Breast epithelium (tissue), 4 donors: ENCODE measurements at regions of chr3 and their contacts with region 1.

Region 1: GRCh38 chr3:127915115-127915936 is at the start of gene KBTBD12:
- DNase-seq: no peak
- H3K4me3 ChIP-seq: peak within 1 kb of the TSS; percentile 47 to 73 (median 54)
- H3K27ac ChIP-seq: no peak within 1 kb of the TSS
- H3K4me1 ChIP-seq: peaks cover 0 to 7% of the 10 kb centered on the region in 2 donors
- H3K27me3 ChIP-seq: no peaks in the 10 kb centered on the region
- CTCF ChIP-seq: no peak
- POLR2A ChIP-seq: no peak
- total RNA-seq, gene KBTBD12: 0.32 to 0.73 TPM in 2 of 3 donors, not detected in the other

Region 2: DNA sequence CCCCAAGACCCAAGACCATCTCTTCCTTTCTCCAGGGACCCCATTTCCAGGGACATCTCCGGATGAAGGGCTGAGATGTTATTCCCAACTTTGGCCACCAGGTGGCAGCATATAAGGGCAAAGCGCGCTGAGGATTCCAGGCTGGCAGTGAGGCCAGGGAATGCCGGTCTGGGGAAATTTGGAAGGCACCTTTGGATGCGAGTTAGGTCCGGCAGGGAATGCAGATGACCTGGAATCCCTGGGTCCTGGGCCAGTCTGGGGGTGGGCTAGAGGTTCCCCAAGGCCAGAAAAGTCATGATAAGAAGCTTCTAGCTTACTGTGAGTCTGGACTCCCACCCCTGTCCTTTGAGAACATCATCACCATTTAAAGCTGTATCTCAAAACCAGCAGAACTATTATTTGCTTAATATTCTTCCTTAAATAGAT is 1393.0 kb before region 1 on chr3:
- intact Hi-C with region 1: loop called (anchors 5 kb)
- DNase-seq: peak; percentile 34 to 63
- H3K4me3 ChIP-seq: no peak overlapping the region
- H3K27ac ChIP-seq: no peak overlapping the region
- H3K4me1 ChIP-seq: peaks cover 0 to 4% of the 10 kb centered on the region in 2 donors
- H3K27me3 ChIP-seq: peaks cover 3 to 22% of the 10 kb centered on the region in 2 donors
- CTCF ChIP-seq: peak; percentile 78 to 87 (median 81)
- POLR2A ChIP-seq: no peak

Region 3: DNA sequence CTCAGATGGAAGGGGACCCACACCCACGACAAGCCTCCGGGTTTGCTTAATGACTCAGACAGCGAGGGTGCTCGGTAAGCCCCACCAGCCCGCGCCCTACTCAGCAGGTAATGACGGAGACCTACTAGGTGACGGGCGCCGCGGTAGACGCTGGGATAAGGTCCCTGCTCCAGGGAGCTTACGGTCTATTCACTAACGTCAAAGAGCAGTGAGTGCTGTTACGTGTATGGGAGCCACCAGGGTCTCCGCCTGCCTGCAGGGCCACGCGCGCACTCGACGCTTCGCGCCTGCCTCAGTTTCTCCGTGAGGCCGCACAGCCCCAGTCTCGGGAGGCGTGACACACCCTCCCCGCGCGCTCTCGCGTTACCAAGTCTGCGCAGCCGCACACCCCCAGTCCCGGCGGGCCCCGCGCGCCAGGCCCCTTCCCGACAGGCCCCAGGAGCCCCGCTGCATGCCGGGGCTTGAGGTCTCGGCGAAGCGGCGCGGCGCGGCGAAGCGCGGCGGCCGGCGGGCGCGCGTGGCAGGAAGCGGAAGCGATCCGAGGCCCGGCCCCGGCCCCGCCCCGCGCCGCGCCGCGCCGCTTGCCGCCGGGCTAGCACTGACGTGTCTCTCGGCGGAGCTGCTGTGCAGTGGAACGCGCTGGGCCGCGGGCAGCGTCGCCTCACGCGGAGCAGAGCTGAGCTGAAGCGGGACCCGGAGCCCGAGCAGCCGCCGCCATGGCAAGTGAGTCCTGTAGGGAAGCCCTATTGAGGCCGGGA is 136.7 kb after region 1 on chr3 and contains the start of gene SEC61A1:
- intact Hi-C with region 1: no loop called
- DNase-seq: peak; percentile 91 to 94
- H3K4me3 ChIP-seq: peak within 1 kb of the TSS; percentile 76 to 97 (median 96)
- H3K27ac ChIP-seq: peak within 1 kb of the TSS; percentile 92 to 96
- H3K4me1 ChIP-seq: peaks cover 0 to 12% of the 10 kb centered on the region in 2 donors
- H3K27me3 ChIP-seq: no peaks in the 10 kb centered on the region
- CTCF ChIP-seq: no peak
- POLR2A ChIP-seq: no peak
- total RNA-seq, gene SEC61A1: 105 to 166 (median 142) TPM